Heart right ventricle (tissue), 16 donors: ENCODE measurements at regions of chr5 and their contacts with region 1.

Region 1: GRCh38 chr5:42767491-42768105 is 11.0 kb downstream of the CCDC152 start:
- DNase-seq: no peak
- ATAC-seq: peak in 1 of 8 donors; percentile 46
- H3K4me3 ChIP-seq: no peak overlapping the region
- H3K27ac ChIP-seq: no peak overlapping the region
- H3K4me1 ChIP-seq: peaks cover 0 to 6% (median 0%) of the 10 kb centered on the region in 9 donors
- H3K27me3 ChIP-seq: no peaks in the 10 kb centered on the region
- CTCF ChIP-seq: peak in 8 of 9 donors; percentile 26 to 76 (median 60)

Region 2: GRCh38 chr5:42005561-42006153 is 761.9 kb before region 1 on chr5:
- intact Hi-C with region 1: loop called in 6 of 10 experiments (anchors 2 to 10 kb)
- DNase-seq: no peak
- ATAC-seq: no peak
- H3K4me3 ChIP-seq: no peak overlapping the region
- H3K27ac ChIP-seq: no peak overlapping the region
- H3K4me1 ChIP-seq: no peaks in the 10 kb centered on the region
- H3K27me3 ChIP-seq: no peaks in the 10 kb centered on the region
- CTCF ChIP-seq: peak; percentile 44 to 71 (median 67)

Region 3: GRCh38 chr5:42015681-42016080 is 751.9 kb before region 1 on chr5:
- intact Hi-C with region 1: loop called in 1 of 10 experiments (anchors 5 kb)
- DNase-seq: no peak
- ATAC-seq: no peak
- H3K4me3 ChIP-seq: no peak overlapping the region
- H3K27ac ChIP-seq: no peak overlapping the region
- H3K4me1 ChIP-seq: peaks cover 0 to 4% (median 0%) of the 10 kb centered on the region in 9 donors
- H3K27me3 ChIP-seq: peaks cover 0 to 5% (median 0%) of the 10 kb centered on the region in 7 donors
- CTCF ChIP-seq: no peak

Region 4: DNA sequence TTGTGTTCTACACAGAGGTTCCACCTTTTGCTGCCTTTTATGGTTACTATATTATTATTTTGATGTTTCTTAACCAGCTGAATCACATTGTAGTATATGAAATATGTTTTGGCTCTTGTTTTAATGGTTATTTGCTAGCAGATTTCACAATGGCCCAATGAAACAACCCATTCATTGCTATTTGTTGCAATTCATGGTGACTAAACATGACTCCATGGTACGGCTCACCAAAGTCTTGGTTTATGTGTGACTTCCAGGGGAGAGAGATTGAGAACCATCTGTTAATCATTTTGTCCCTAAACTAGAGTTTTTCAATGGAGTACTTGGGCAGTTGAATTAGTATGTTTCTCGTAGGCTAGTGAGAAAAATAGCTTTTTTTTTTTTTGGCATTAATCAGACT is 236.0 kb before region 1 on chr5:
- intact Hi-C with region 1: no loop called
- DNase-seq: no peak
- ATAC-seq: peak in 3 of 8 donors; percentile 11 to 62 (median 14)
- H3K4me3 ChIP-seq: no peak overlapping the region
- H3K27ac ChIP-seq: no peak overlapping the region
- H3K4me1 ChIP-seq: no peaks in the 10 kb centered on the region
- H3K27me3 ChIP-seq: no peaks in the 10 kb centered on the region
- CTCF ChIP-seq: no peak

Region 5: DNA sequence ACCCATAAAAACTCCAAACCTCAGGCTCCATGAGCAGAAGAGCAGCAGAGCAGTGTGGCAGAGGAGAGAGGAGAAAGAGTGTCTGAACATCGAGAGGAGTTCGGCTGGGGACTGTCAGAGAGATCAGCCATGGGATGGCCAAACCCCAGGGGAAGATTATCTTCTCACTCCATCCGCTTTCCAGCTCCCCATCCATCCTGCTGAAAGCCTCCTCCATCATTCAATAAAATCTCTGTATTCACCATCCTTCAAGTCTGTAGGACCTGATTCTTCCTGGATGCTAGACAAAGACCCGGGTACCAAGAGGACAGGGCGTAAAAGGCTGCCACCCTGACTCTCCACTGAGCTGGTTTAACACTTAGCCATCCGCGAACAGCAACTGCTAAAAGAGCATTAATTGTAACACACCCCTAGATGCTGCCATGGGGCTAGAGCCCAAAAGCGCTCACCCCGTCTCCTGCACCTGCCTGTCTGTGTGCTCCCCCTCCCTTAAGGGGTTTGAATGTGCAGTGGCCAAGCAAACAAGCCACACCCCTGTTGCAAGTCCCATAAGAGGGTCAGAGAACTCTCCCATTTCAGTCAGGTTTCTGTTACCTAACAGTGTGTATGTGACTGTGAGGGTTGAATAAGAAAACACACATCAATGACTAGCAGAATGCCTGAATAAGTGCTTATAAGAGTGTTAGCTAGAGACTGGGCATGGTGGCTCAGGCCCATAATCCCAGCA is 58.0 kb after region 1 on chr5:
- intact Hi-C with region 1: no loop called
- DNase-seq: no peak
- ATAC-seq: no peak
- H3K4me3 ChIP-seq: no peak overlapping the region
- H3K27ac ChIP-seq: peak overlapping the region in 1 of 10 donors; percentile 20
- H3K4me1 ChIP-seq: peaks cover 0 to 14% (median 5%) of the 10 kb centered on the region in 9 donors
- H3K27me3 ChIP-seq: no peaks in the 10 kb centered on the region
- CTCF ChIP-seq: no peak